Activated CD4-positive, alpha-beta memory T cell treated with anti-CD3 and anti-CD28 coated beads, Interleukin-2, amount 10 ng/mL, durations not matched to agents 7 days and 5 days (primary cell): ENCODE measurements at regions of chr16 and their contacts with region 1.

Region 1: GRCh38 chr16:25224731-25225319 is 8.1 kb downstream of the AQP8 start:
- DNase-seq: no peak
- H3K4me3 Mint-ChIP-seq: no peak overlapping the region
- H3K27ac Mint-ChIP-seq: no peak overlapping the region
- H3K4me1 Mint-ChIP-seq: no peaks in the 10 kb centered on the region
- H3K27me3 Mint-ChIP-seq: no peaks in the 10 kb centered on the region

Region 2: GRCh38 chr16:25051406-25052150 is 173.2 kb before region 1 on chr16:
- CTCF ChIA-PET with region 1: interaction called, 13 read pairs
- POLR2A ChIA-PET with region 1: no interaction called
- DNase-seq: no peak
- H3K4me3 Mint-ChIP-seq: peak overlapping the region; percentile 51
- H3K27ac Mint-ChIP-seq: peak overlapping the region; percentile 52
- H3K4me1 Mint-ChIP-seq: peaks cover 53% of the 10 kb centered on the region
- H3K27me3 Mint-ChIP-seq: no peaks in the 10 kb centered on the region

Region 3: GRCh38 chr16:25126820-25127232 is 98.0 kb before region 1 on chr16:
- CTCF ChIA-PET with region 1: interaction called, 63 read pairs
- POLR2A ChIA-PET with region 1: no interaction called
- DNase-seq: peak; percentile 55
- H3K4me3 Mint-ChIP-seq: no peak overlapping the region
- H3K27ac Mint-ChIP-seq: no peak overlapping the region
- H3K4me1 Mint-ChIP-seq: peaks cover 33% of the 10 kb centered on the region
- H3K27me3 Mint-ChIP-seq: no peaks in the 10 kb centered on the region

Region 4: GRCh38 chr16:25213709-25214397 is 11.0 kb before region 1 on chr16:
- CTCF ChIA-PET with region 1: interaction called, 19 read pairs
- POLR2A ChIA-PET with region 1: no interaction called
- DNase-seq: no peak
- H3K4me3 Mint-ChIP-seq: no peak overlapping the region
- H3K27ac Mint-ChIP-seq: no peak overlapping the region
- H3K4me1 Mint-ChIP-seq: peaks cover 2% of the 10 kb centered on the region
- H3K27me3 Mint-ChIP-seq: peaks cover 3% of the 10 kb centered on the region

Region 5: GRCh38 chr16:25235991-25236390 is 11.2 kb after region 1 on chr16:
- CTCF ChIA-PET with region 1: interaction called, 28 read pairs
- POLR2A ChIA-PET with region 1: no interaction called
- DNase-seq: no peak
- H3K4me3 Mint-ChIP-seq: no peak overlapping the region
- H3K27ac Mint-ChIP-seq: no peak overlapping the region
- H3K4me1 Mint-ChIP-seq: peaks cover 5% of the 10 kb centered on the region
- H3K27me3 Mint-ChIP-seq: peaks cover 1% of the 10 kb centered on the region

Region 6: DNA sequence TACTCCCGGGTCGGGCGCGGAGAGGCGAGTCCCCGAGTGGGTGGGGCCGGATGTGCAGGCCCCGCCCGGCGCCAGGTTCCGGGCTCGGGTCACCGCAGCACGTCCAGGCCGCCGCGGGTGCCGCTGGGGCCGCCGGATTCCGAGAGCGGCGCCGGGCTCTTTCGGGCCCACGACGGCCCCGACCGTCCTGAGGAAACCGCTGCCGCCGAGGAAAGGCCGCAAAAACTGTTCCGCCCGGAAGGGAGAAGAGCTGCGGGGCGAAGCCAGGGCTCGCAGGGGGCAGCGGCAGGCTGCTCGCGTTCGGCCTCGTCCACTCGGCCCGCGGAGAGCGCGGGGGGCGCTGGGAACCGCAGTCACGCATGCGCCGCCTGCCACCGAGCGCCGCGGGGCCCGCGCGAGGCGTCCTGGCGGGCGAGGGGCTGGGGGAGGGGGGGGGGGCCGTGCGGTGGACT is 32.7 kb after region 1 on chr16 and contains the start of gene ZKSCAN2:
- CTCF ChIA-PET with region 1: interaction called, 18 read pairs
- POLR2A ChIA-PET with region 1: interaction called, 3 read pairs
- DNase-seq: peak; percentile 90
- H3K4me3 Mint-ChIP-seq: peak within 1 kb of the TSS; percentile 90
- H3K27ac Mint-ChIP-seq: peak within 1 kb of the TSS; percentile 93
- H3K4me1 Mint-ChIP-seq: peaks cover 65% of the 10 kb centered on the region
- H3K27me3 Mint-ChIP-seq: no peaks in the 10 kb centered on the region
- total RNA-seq, gene ZKSCAN2: 4.1 to 4.3 TPM